GM10248 (cell line): ENCODE measurements at regions of chr3 and their contacts with region 1.

Region 1: DNA sequence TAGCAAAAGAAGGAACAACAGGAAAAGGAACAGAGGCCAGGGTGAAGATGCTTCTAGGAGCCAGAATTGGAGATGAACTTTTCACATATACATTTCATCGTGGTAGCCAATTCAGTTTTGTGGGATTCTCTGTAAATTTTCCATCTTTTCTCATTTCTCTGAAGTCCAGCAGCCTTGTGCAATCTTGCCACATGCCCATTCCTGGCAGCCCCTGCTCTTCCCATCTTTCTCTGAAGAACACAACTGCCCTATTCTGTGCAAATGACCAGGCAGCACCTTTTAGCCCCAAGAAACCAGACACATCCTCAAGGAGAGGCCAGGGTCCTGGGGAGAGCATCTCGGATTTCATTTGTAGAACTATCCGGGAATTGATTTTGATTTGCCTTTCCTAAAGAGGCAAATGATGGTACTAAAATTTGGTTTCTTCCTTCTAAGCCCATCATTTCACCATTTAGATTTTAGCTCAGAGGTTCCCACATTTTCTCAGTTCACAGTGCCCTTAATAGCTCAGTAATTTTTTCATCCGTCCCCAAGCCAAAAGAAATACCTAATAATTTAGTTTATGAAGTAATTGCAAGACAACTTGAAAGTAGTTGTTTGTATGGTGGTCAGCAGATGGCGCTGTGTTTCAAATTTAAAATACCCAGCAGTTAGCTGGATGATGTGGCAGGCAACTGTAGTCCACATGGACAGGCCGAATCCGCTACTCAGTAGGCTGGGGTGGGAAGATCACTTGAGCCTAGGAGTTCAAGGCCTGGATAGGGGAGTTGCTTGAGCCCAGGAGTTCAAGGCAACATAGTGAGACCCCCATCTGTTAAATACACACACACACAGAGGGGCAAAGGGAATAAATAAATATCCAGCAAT is 61.3 kb upstream of the ACKR4 start:
- DNase-seq: peak; percentile 54
- CTCF ChIP-seq: peak; percentile 64

Region 2: GRCh38 chr3:132522353-132522752 is 13.5 kb before region 1 on chr3:
- CTCF ChIA-PET with region 1: interaction called, 84 read pairs
- POLR2A ChIA-PET with region 1: no interaction called
- DNase-seq: peak; percentile 31
- CTCF ChIP-seq: no peak

Region 3: DNA sequence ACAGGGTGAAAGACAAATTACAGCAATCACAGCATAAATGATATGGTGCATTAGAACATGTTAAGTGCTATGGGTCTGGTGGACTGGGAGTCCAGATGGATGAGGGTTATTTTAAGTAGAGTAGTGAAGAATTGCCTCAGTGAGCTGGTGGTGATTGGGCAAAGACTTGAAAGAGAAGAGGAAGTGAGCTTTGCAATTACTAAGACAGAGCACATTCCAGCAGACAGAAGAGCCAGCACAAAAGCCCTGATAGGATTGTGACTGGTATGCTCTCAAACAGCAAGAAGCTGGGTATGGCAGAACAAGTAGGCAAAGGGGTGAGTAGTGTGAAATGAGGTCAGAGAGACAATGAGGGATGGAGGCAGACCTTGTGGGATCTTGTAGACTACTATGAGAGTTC is 59.2 kb after region 1 on chr3:
- CTCF ChIA-PET with region 1: interaction called, 10 read pairs
- POLR2A ChIA-PET with region 1: no interaction called
- DNase-seq: no peak
- CTCF ChIP-seq: no peak

Region 4: DNA sequence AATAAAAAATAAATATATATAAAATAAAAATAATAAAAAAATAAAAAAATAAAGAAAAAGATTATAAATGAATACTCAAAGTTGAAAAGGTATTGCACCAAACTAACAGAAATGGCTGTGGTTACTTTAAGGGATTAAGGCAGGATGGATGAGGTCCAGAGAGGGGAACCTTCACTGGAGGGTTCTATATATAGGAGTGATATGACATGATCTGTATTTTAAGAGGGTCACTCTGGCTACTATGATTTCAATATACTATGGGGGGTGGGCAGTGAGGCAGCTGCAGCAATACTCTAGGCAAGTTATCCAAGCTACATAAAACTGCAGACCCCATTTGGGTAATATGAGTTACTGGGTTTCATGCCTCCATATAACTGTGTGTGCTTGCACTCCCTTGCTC is 99.2 kb after region 1 on chr3:
- CTCF ChIA-PET with region 1: interaction called, 190 read pairs
- POLR2A ChIA-PET with region 1: no interaction called
- DNase-seq: no peak
- CTCF ChIP-seq: no peak

Region 5: GRCh38 chr3:132669256-132669777 is 133.5 kb after region 1 on chr3:
- CTCF ChIA-PET with region 1: interaction called, 15 read pairs
- POLR2A ChIA-PET with region 1: no interaction called
- DNase-seq: no peak
- CTCF ChIP-seq: no peak

Region 6: DNA sequence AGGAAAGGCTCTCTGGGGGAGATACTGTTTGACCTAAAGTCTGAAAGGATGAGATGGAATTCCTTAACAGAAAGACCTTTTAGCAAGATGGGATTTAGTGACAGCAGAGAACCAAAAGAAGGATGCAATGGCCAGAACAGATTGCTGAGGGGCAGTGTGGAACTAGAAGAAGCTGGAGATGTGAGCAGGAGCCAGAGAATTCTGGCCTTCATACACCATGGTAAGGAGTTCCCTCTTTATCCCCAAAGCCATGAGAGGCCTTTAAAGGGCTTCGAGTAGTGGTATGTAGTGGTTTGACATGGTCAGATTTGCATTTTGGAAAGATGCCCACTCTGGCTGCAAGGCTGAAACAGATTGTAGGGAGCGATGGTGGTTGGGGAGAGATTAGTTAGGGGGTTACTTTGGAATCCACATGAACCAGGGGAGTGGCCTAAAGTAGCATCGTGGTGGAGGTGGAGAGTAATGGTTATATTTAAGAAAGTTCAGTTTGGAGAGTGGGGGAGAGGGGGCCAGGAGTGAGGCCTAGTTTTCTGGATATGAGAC is 220.4 kb after region 1 on chr3:
- CTCF ChIA-PET with region 1: no interaction called
- POLR2A ChIA-PET with region 1: no interaction called
- DNase-seq: no peak
- CTCF ChIP-seq: no peak